ENCODE measurements at regions of chr19 and their contacts with region 1.

Region 1: DNA sequence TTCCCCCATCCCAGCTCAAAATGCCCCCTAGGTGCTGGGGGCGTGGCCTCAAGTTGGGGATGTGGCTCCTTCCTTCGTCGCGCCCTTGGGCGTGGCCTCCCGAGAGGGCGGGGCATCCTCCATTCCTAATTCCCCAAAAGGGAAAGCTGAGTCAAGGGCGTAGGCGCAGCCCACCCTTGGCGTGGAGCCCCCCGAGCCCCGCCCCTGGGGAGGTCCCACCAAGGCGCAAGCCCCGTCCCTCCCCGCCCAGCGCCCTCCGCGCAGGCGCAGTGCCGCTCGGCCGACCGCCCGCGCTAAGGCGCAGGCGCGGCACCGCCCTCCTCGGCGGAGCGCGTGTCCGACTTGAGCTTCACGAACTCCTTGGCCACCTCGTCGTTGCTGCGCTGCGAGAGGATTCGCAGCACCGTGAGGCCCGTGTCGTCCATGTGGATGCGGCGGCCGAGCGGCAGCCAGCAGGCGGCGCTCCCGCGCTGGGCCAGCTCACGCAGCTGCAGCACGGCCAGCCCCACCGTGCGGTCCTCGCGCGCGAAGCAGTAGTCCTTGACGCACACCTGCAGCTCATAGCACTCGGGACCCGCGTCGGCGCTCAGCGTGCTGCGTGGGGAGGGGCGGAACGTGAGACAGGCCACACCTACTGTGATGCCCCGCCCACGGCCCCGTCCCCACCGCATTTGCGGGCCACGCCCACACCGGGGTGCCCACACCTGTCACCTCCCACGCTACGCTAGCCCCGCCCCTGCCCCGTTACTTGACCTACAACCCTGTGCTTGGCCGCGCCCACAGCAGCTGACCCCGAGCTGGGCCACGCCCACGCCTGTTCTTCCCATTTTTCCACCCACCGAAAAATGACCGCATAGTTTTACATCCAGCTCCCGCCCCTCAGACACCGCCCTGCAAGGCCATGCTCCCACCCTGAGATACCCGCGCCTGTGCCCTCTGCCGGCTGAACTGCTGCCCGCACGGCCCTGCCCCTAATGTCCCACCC is 50.6 kb downstream of the COLGALT1 start:
- DNase-seq: peak; percentile 32 to 33
- H3K4me3 ChIP-seq: peak overlapping the region in 1 of 3 donors; percentile 9
- H3K27ac ChIP-seq: no peak overlapping the region
- H3K4me1 ChIP-seq: peaks cover 0 to 11% of the 10 kb centered on the region in 2 donors
- H3K27me3 ChIP-seq: no peaks in the 10 kb centered on the region
- CTCF ChIP-seq: peak in 4 of 6 experiments; percentile 30 to 49 (median 42)
- POLR2A ChIP-seq: no peak

Region 2: DNA sequence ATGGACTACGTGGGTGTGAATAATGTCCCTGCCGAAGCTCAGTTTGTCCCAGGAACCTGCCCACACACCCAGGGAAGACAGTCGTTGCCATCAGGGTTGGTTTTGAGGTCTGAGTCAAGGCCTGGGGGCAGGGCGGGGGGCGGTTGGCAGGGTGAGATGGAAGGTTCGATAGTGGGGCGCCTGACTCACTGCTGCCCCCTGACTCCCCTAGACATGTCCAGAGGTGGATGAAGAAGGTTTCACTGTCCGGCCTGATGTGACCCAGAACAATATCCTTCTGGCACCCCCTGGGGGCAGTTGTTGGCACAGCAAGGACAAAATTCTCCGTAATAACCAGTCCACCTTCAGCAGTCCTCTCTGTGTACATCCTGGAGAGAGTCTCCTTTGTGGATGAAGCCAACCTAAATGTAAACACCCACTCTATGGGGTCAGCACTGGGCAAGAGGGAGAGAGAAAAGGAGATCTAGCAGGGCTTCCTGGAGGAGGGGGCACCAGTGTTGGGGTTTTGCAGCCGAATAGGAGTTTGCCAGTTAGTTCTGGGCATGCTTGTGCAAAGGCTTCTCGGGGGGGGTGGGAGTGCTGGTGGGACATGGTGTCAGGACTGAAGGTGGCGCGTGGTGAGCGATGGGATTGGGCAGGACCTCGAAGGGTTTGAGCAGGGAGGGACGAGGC is 169.3 kb after region 1 on chr19:
- intact Hi-C with region 1: loop called (anchors 10 kb)
- DNase-seq: no peak
- H3K4me3 ChIP-seq: no peak overlapping the region
- H3K27ac ChIP-seq: no peak overlapping the region
- H3K4me1 ChIP-seq: peaks cover 0 to 10% of the 10 kb centered on the region in 2 donors
- H3K27me3 ChIP-seq: no peaks in the 10 kb centered on the region
- CTCF ChIP-seq: peak in 1 of 6 experiments; percentile 25
- POLR2A ChIP-seq: no peak

Measured in thyroid gland (tissue), 4 donors.